CD4-positive, alpha-beta memory T cell (primary cell): ENCODE measurements at regions of chr11 and their contacts with region 1.

Region 1: GRCh38 chr11:60985991-60986915 is 14.8 kb downstream of the CD6 start:
- DNase-seq: peak; percentile 92 to 99 (median 97)
- H3K4me3 ChIP-seq: peak overlapping the region in 1 of 2 donors; percentile 39
- H3K4me3 Mint-ChIP-seq: peak overlapping the region; percentile 61 to 87 (median 78)
- H3K27ac ChIP-seq: peak overlapping the region; percentile 92
- H3K27ac Mint-ChIP-seq: peak overlapping the region; percentile 88 to 100 (median 97)
- H3K4me1 ChIP-seq: peaks cover 94% of the 10 kb centered on the region
- H3K4me1 Mint-ChIP-seq: peaks cover 69 to 96% (median 86%) of the 10 kb centered on the region in 4 donors
- H3K27me3 ChIP-seq: no peaks in the 10 kb centered on the region
- H3K27me3 Mint-ChIP-seq: no peaks in the 10 kb centered on the region

Region 2: DNA sequence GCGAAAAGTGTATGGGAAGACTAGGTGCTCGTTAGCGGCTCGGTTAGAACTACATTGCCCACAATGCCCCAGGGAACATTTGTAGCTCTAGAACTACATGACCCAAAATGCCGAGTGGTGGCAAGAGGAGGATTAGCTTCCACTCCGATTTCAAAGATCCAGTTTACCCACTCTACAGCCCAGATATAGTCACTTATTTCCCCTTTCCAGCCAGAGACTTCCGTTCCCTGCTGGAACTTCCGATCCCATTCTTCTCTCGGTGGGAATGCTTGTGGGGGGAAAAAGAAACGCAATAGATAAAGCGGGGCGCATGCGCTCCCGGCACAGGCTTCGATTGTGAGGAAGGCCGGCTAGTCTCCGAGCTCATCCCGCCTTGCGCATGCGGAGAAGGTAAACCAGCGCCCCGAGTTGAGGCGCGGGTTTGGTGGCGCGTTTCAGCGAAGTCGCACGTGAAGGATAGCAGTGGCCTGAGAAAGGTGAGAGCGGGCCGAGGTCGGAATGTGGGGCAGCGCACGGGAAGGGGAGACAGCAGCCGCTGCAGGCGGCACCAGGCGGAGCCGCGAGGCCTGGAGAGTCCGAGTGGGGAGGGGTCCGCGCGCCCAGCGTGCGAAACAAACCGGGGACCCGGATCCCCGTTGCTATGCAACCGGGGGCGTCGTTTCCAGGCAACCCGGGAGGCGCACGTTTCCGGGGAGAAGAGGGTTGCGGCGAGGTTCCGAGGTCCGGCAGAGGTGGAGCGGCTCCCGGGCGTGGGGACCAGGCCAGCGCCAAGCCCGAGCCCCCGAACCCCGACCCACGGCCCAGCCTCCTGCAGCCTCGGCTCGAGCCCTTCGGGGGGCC is 72.2 kb before region 1 on chr11 and contains the start of gene TMEM109:
- CTCF ChIA-PET with region 1: interaction called, 5 read pairs
- POLR2A ChIA-PET with region 1: interaction called, 23 read pairs
- intact Hi-C with region 1: no loop called
- DNase-seq: peak; percentile 90 to 92 (median 91)
- H3K4me3 ChIP-seq: peak within 1 kb of the TSS; percentile 79 to 96
- H3K4me3 Mint-ChIP-seq: peak within 1 kb of the TSS; percentile 92 to 100 (median 98)
- H3K27ac ChIP-seq: peak within 1 kb of the TSS; percentile 96
- H3K27ac Mint-ChIP-seq: peak within 1 kb of the TSS; percentile 87 to 99 (median 98)
- H3K4me1 ChIP-seq: peaks cover 47% of the 10 kb centered on the region
- H3K4me1 Mint-ChIP-seq: peaks cover 31 to 65% (median 44%) of the 10 kb centered on the region in 4 donors
- H3K27me3 ChIP-seq: no peaks in the 10 kb centered on the region
- H3K27me3 Mint-ChIP-seq: no peaks in the 10 kb centered on the region
- total RNA-seq, gene TMEM109: 66.9 to 68.0 TPM

Region 3: DNA sequence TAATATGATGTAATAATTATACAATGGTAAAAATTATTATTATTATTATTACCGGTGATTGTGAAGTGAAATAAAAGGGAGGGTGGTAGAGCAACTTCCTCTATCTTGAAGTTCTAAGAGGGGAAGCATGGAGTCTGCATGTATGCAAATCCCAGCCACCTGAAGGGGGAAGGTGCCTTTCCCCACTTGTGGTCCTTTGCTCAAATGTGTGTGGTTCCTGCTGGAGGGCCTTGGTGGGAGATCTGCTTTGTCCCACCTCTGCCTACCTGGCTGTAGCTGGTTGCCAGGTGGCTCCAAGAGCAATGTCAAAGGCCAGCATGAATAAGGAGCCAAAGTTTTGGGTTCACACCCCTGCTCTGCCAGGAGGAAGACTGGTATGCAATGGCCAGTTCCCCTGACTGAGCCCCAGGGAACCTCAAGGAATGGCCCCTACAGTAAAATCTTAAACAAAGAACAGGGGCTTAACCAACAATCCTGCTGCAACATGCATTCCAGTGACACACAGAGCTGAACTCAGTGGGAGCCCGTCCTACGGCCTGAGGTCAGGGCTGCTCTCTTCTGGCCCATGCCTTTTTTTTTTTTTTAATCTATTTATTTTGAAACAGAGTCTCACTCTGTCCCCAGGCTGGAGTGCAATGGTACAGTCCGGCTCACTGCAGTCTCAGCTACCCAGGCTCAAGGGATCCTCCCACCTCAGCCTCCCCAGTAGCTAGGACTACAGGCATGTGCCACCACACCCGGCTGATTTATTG is 53.5 kb before region 1 on chr11:
- CTCF ChIA-PET with region 1: no interaction called
- POLR2A ChIA-PET with region 1: no interaction called
- intact Hi-C with region 1: no loop called
- DNase-seq: no peak
- H3K4me3 ChIP-seq: no peak overlapping the region
- H3K4me3 Mint-ChIP-seq: no peak overlapping the region
- H3K27ac ChIP-seq: no peak overlapping the region
- H3K27ac Mint-ChIP-seq: peak overlapping the region in 1 of 7 donors; percentile 4
- H3K4me1 ChIP-seq: no peaks in the 10 kb centered on the region
- H3K4me1 Mint-ChIP-seq: no peaks in the 10 kb centered on the region
- H3K27me3 ChIP-seq: no peaks in the 10 kb centered on the region
- H3K27me3 Mint-ChIP-seq: peaks cover 4 to 10% of the 10 kb centered on the region in 2 donors

Region 4: DNA sequence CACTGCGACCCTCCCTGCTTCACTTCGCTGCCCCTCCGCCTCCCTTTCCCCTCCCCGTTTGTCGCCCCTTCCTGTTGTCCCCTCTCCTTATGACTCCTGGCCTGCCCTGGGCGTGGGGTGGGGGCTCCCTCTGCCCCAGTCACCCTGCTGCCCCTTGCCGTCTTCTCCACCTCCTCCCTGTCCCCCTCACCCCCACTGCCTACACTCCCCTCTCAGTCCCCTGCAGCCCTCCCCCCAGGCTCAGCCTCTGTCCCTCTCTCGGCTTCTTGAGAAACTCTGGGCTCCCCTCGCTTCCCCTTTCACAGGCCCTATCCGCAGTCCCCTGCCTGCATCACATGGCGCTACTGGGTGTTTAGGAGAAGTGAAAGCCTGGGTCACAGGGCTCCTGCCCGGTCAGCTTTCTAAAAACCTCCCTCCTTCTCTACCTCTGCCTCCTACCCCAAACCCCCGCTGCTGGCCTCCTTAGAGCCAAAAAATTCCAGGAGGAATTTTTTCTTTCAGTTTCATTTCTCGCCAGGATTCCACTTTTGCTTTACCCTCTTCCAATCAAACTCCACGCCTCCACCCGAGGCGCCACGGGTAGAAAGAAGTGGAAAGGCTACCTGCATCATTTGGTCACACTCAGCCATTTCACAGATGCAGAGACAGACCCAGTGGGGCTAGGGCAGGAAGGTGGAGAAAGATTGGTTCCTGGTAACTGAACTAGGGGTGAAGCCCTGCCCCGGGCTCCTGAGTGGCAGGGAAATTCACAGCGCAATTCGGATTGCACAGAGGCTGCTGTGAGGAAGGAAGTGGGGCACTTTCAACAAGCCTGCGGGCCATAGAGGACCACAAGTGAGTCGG is 34.1 kb before region 1 on chr11 and contains the start of gene SLC15A3:
- CTCF ChIA-PET with region 1: no interaction called
- POLR2A ChIA-PET with region 1: no interaction called
- intact Hi-C with region 1: no loop called
- DNase-seq: peak in 2 of 5 donors; percentile 17 to 53
- H3K4me3 ChIP-seq: no peak within 1 kb of the TSS
- H3K4me3 Mint-ChIP-seq: peak within 1 kb of the TSS; percentile 72 to 88 (median 79)
- H3K27ac ChIP-seq: no peak within 1 kb of the TSS
- H3K27ac Mint-ChIP-seq: peak within 1 kb of the TSS; percentile 29 to 85 (median 66)
- H3K4me1 ChIP-seq: peaks cover 9% of the 10 kb centered on the region
- H3K4me1 Mint-ChIP-seq: peaks cover 6 to 20% (median 11%) of the 10 kb centered on the region in 4 donors
- H3K27me3 ChIP-seq: peaks cover 9% of the 10 kb centered on the region
- H3K27me3 Mint-ChIP-seq: peaks cover 5 to 13% of the 10 kb centered on the region in 2 donors
- total RNA-seq, gene SLC15A3: 4.6 to 5.4 TPM

Region 5: GRCh38 chr11:61004180-61004611 is 17.9 kb after region 1 on chr11:
- CTCF ChIA-PET with region 1: interaction called, 4 read pairs
- POLR2A ChIA-PET with region 1: interaction called, 75 read pairs
- intact Hi-C with region 1: loop called (anchors 2 kb)
- DNase-seq: peak in 3 of 5 donors; percentile 47 to 76 (median 60)
- H3K4me3 ChIP-seq: peak overlapping the region; percentile 5 to 14
- H3K4me3 Mint-ChIP-seq: peak overlapping the region; percentile 63 to 87 (median 83)
- H3K27ac ChIP-seq: peak overlapping the region; percentile 54
- H3K27ac Mint-ChIP-seq: peak overlapping the region; percentile 89 to 97 (median 95)
- H3K4me1 ChIP-seq: peaks cover 93% of the 10 kb centered on the region
- H3K4me1 Mint-ChIP-seq: peaks cover 51 to 90% (median 66%) of the 10 kb centered on the region in 4 donors
- H3K27me3 ChIP-seq: no peaks in the 10 kb centered on the region
- H3K27me3 Mint-ChIP-seq: no peaks in the 10 kb centered on the region

Region 6: GRCh38 chr11:61049859-61050258 is 63.6 kb after region 1 on chr11:
- CTCF ChIA-PET with region 1: interaction called, 3 read pairs
- POLR2A ChIA-PET with region 1: interaction called, 116 read pairs
- intact Hi-C with region 1: no loop called
- DNase-seq: no peak
- H3K4me3 ChIP-seq: no peak overlapping the region
- H3K4me3 Mint-ChIP-seq: peak overlapping the region in 2 of 8 donors; percentile 41 to 63
- H3K27ac ChIP-seq: no peak overlapping the region
- H3K27ac Mint-ChIP-seq: peak overlapping the region; percentile 26 to 84 (median 71)
- H3K4me1 ChIP-seq: peaks cover 50% of the 10 kb centered on the region
- H3K4me1 Mint-ChIP-seq: peaks cover 36 to 71% (median 44%) of the 10 kb centered on the region in 4 donors
- H3K27me3 ChIP-seq: no peaks in the 10 kb centered on the region
- H3K27me3 Mint-ChIP-seq: no peaks in the 10 kb centered on the region

Region 7: DNA sequence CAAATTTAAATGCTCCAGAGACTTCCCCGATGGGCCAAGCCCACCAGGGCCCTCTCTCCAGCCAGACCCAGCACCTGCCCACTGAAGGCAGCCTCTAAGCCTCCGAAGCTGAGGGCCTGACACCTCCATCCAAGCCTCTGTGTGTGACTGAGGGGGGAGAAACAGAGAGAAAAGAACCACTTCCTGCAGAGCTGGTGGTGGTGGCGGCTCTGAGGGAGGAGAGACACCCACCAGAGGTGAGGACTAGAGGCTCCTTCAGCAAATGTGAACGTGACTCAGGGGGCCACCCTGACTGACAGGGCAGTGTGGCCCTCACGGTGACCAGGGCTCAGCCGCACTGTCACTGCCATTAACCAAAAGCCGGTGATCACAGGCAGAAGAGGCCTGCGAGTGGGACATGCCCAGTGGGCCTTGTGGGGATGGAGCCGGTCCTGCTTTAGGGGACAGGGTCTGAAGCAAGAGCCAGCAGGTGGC is 85.0 kb after region 1 on chr11:
- CTCF ChIA-PET with region 1: interaction called, 3 read pairs
- POLR2A ChIA-PET with region 1: interaction called, 157 read pairs
- intact Hi-C with region 1: no loop called
- DNase-seq: peak; percentile 61 to 77 (median 72)
- H3K4me3 ChIP-seq: peak overlapping the region in 1 of 2 donors; percentile 21
- H3K4me3 Mint-ChIP-seq: peak overlapping the region; percentile 60 to 89 (median 79)
- H3K27ac ChIP-seq: peak overlapping the region; percentile 63
- H3K27ac Mint-ChIP-seq: peak overlapping the region; percentile 92 to 98 (median 96)
- H3K4me1 ChIP-seq: peaks cover 98% of the 10 kb centered on the region
- H3K4me1 Mint-ChIP-seq: peaks cover 50 to 92% (median 74%) of the 10 kb centered on the region in 4 donors
- H3K27me3 ChIP-seq: no peaks in the 10 kb centered on the region
- H3K27me3 Mint-ChIP-seq: no peaks in the 10 kb centered on the region

Region 8: GRCh38 chr11:61102667-61103571 is 116.7 kb after region 1 on chr11:
- CTCF ChIA-PET with region 1: interaction called, 3 read pairs
- POLR2A ChIA-PET with region 1: interaction called, 39 read pairs
- intact Hi-C with region 1: no loop called
- DNase-seq: peak; percentile 34 to 63 (median 47)
- H3K4me3 ChIP-seq: peak overlapping the region; percentile 99 to 100
- H3K4me3 Mint-ChIP-seq: no peak overlapping the region
- H3K27ac ChIP-seq: peak overlapping the region; percentile 100
- H3K27ac Mint-ChIP-seq: no peak overlapping the region
- H3K4me1 ChIP-seq: peaks cover 64% of the 10 kb centered on the region
- H3K4me1 Mint-ChIP-seq: peaks cover 0 to 47% (median 28%) of the 10 kb centered on the region in 4 donors
- H3K27me3 ChIP-seq: no peaks in the 10 kb centered on the region
- H3K27me3 Mint-ChIP-seq: no peaks in the 10 kb centered on the region